ENCODE measurements at regions of chr6 and their contacts with region 1.

Region 1: GRCh38 chr6:130513770-130514169 is 148.0 kb downstream of the TMEM200A start:
- DNase-seq: peak in 6 of 9 experiments; percentile 2 to 88 (median 32)
- ATAC-seq: peak; percentile 84
- H3K4me3 ChIP-seq: no peak overlapping the region
- H3K4me3 Mint-ChIP-seq: peak overlapping the region; percentile 45
- H3K27ac ChIP-seq: peak overlapping the region; percentile 34 to 51
- H3K27ac Mint-ChIP-seq: peak overlapping the region; percentile 92
- H3K4me1 ChIP-seq: peaks cover 40% of the 10 kb centered on the region
- H3K4me1 Mint-ChIP-seq: peaks cover 64% of the 10 kb centered on the region
- H3K27me3 ChIP-seq: no peaks in the 10 kb centered on the region
- H3K27me3 Mint-ChIP-seq: no peaks in the 10 kb centered on the region
- CTCF ChIP-seq: no peak

Region 2: GRCh38 chr6:130525408-130525807 is 11.6 kb after region 1 on chr6:
- CTCF ChIA-PET with region 1: no interaction called
- POLR2A ChIA-PET with region 1: no interaction called
- intact Hi-C with region 1: no loop called
- DNase-seq: peak in 1 of 9 experiments; percentile 33
- ATAC-seq: peak; percentile 42
- H3K4me3 ChIP-seq: no peak overlapping the region
- H3K4me3 Mint-ChIP-seq: peak overlapping the region; percentile 30
- H3K27ac ChIP-seq: peak overlapping the region in 1 of 2 experiments; percentile 26
- H3K27ac Mint-ChIP-seq: peak overlapping the region; percentile 91
- H3K4me1 ChIP-seq: peaks cover 34% of the 10 kb centered on the region
- H3K4me1 Mint-ChIP-seq: peaks cover 45% of the 10 kb centered on the region
- H3K27me3 ChIP-seq: no peaks in the 10 kb centered on the region
- H3K27me3 Mint-ChIP-seq: no peaks in the 10 kb centered on the region
- CTCF ChIP-seq: no peak

Region 3: DNA sequence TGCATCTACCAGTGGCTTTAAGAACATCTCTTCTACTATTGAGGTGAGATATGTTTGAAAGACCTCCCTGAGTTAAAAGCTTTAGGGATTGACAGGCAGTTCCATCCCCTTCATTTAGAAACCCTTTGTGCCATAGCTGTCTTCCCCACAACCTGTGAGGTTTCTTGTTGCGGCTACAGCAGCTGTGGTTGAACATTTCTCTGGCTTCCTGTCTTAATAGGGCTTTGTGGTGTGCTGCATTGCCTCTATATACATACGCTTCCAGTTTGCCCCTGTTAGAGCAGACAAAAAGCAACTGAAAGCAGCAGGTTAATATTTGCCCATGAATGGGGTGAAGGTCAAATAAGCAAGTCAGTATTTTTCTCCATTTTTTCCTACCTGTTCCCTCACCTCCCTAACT is 62.2 kb after region 1 on chr6:
- CTCF ChIA-PET with region 1: no interaction called
- POLR2A ChIA-PET with region 1: no interaction called
- intact Hi-C with region 1: loop called in 1 of 2 experiments (anchors 5 kb)
- DNase-seq: peak; percentile 11 to 82 (median 53)
- ATAC-seq: peak; percentile 90
- H3K4me3 ChIP-seq: peak overlapping the region in 1 of 2 experiments; percentile 1
- H3K4me3 Mint-ChIP-seq: peak overlapping the region; percentile 51
- H3K27ac ChIP-seq: peak overlapping the region in 1 of 2 experiments; percentile 9
- H3K27ac Mint-ChIP-seq: peak overlapping the region; percentile 75
- H3K4me1 ChIP-seq: peaks cover 36% of the 10 kb centered on the region
- H3K4me1 Mint-ChIP-seq: peaks cover 53% of the 10 kb centered on the region
- H3K27me3 ChIP-seq: no peaks in the 10 kb centered on the region
- H3K27me3 Mint-ChIP-seq: no peaks in the 10 kb centered on the region
- CTCF ChIP-seq: no peak

Measured in CD8-positive, alpha-beta T cell (primary cell).